AG04450 (cell line): ENCODE measurements at regions of chr7 and their contacts with region 1.

Region 1: DNA sequence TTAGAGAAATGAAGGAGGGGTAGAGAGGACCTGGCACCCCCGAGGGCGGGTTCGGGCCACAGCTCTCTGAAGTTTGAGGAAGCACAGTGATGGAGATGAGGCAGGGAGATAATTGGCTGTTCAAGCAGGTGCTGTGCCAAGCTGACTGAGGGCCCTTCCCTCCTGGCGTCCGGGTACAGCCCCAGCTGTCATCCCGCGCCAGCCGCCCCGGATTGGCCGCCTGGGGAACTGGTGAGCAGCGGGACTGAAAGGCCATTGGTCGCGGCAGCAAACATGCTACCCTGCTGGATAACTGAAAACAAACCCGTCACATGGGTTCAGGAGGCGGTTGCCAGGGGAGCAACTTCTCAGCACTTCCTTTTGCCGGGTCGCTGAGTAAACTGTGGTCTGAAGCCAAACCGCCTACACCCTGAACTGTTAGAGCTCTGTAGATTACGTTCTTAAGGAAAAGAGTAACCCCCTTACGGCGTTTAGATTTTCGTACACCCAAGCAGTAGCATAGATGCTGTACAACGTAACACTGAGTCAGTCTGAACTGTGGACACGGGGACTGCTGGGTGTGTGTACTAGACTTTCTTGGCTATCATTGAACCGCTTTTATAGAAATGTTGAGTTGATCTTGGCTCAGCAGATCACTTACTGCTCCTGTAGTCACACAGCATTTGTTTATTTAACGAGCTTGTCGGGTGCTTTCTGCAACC is 1.3 kb downstream of the INSIG1 start:
- DNase-seq: peak; percentile 88
- H3K4me3 ChIP-seq: peak overlapping the region; percentile 73
- H3K27ac ChIP-seq: peak overlapping the region; percentile 80
- H3K27me3 ChIP-seq: no peaks in the 10 kb centered on the region
- CTCF ChIP-seq: no peak

Region 2: DNA sequence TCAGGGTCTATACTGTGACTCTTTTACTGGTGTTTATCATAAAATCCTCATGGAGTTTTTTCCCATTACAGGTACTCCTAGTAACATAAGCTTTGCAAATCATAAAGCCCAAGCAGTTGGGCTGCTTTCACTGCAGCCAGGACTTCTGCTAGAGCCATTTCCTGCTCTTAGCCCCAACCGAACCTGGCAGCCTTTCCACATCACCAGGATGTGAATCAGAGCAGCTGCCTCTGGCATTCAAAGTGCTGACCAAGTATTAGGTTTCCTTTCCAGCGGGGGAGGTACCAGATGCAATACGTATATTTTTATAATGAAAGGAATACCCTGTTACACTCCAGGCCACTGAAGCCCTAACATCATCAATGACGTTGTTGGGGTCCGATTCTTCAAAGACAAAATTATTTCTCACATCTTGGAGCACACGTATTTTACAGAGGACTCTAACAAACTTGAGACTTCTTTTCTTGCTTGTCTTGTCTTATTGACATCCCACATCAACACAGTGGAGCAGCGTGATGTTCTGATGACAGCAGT is 232.5 kb before region 1 on chr7:
- CTCF ChIA-PET with region 1: no interaction called
- POLR2A ChIA-PET with region 1: no interaction called
- DNase-seq: peak; percentile 53
- H3K4me3 ChIP-seq: no peak overlapping the region
- H3K27ac ChIP-seq: no peak overlapping the region
- H3K27me3 ChIP-seq: peaks cover 6% of the 10 kb centered on the region
- CTCF ChIP-seq: no peak

Region 3: DNA sequence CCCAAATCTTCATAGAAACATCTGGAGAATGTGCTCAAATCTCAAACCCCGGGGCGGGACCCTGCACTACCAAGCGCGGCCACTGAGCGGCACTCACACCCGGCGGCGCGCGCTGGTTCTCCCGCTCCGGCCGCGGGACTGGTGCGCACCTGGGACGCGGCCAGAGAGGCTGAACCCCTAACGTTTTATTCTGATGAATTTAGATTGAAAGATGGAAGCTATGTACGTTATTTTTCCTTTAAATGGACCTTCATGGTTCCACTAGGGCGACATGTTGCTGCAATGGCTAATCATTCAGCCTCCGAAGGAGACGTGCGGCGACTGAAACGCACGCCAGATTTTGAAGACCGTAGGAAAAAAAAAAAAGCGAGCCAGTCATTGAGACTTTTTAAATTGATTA is 108.3 kb before region 1 on chr7:
- CTCF ChIA-PET with region 1: interaction called, 18 read pairs
- POLR2A ChIA-PET with region 1: no interaction called
- DNase-seq: no peak
- H3K4me3 ChIP-seq: 0 out of 2 replicates have a peak overlapping the region, but pooled peaks have one; percentile 13
- H3K27ac ChIP-seq: no peak overlapping the region
- H3K27me3 ChIP-seq: peaks cover 2% of the 10 kb centered on the region
- CTCF ChIP-seq: peak; percentile 87

Region 4: GRCh38 chr7:155205368-155206317 is 93.3 kb before region 1 on chr7:
- CTCF ChIA-PET with region 1: no interaction called
- POLR2A ChIA-PET with region 1: interaction called, 14 read pairs
- DNase-seq: peak; percentile 87
- H3K4me3 ChIP-seq: peak overlapping the region; percentile 46
- H3K27ac ChIP-seq: peak overlapping the region; percentile 82
- H3K27me3 ChIP-seq: no peaks in the 10 kb centered on the region
- CTCF ChIP-seq: no peak

Region 5: DNA sequence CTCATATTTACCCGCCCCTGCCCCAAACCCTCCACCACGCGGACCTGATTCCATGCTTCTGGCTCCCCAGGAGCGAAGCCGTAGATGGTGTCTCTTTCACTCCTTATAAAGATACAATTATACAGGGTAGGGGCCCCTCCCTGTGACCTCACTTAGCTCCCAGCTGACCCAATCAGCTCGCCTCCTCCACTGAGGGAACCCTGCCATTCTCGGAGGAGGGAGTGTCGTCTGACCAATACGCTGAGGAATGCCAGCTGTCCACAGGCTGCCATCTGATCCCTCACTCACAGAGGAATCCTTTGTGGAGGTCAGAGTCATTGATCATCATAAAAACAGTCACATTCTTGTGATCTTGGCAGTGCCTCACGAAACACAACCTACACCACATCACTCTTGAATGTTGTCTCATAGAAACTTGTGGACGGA is 68.8 kb before region 1 on chr7:
- CTCF ChIA-PET with region 1: no interaction called
- POLR2A ChIA-PET with region 1: interaction called, 10 read pairs
- DNase-seq: peak; percentile 94
- H3K4me3 ChIP-seq: no peak overlapping the region
- H3K27ac ChIP-seq: peak overlapping the region; percentile 73
- H3K27me3 ChIP-seq: no peaks in the 10 kb centered on the region
- CTCF ChIP-seq: no peak

Region 6: DNA sequence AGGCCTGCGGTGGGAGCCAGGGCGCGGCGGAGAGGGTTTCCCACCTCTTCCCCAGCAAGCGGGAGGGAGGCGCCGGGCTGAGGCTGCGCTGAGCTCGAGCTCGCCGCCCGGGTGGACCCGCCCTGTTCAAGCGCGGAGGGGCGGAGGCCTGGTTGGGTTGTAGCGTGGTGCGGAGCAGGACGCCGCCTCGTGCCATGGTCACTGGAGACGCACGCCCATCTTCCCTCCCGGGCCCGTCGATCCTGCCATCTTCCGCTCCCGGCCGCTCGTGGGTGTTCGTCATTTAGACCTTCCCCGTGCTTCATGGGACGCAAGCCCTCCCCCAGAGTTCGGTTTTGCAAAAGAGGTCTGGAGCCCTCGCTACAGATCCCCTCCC is 149.6 kb after region 1 on chr7:
- CTCF ChIA-PET with region 1: no interaction called
- POLR2A ChIA-PET with region 1: no interaction called
- DNase-seq: no peak
- H3K4me3 ChIP-seq: no peak overlapping the region
- H3K27ac ChIP-seq: no peak overlapping the region
- H3K27me3 ChIP-seq: peaks cover 55% of the 10 kb centered on the region
- CTCF ChIP-seq: no peak